Left colon (tissue), 2 donors: ENCODE measurements at regions of chr10 and their contacts with region 1.

Region 1: GRCh38 chr10:104045151-104046089 is 40.3 kb downstream of the COL17A1 start:
- DNase-seq: peak in 1 of 2 donors; percentile 38
- ATAC-seq: peak; percentile 63

Region 2: DNA sequence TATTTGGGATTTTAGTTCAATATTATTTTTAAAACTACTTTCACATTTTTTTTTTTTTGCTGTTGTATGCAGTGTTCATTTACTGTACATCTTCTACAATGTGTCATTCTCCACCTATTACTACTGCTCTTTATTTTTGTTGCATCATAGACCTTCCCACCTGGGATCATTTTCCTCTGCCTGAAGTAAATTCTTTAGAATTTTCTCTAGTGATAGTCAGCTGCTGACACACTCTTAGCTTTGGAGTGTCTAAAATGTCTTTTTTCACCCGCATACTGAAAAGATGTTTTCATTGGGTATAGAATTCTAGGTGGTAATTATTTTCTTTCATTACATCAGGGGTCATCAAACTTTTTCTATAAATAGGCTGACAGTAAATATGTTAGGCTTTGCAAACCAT is 156.2 kb after region 1 on chr10:
- intact Hi-C with region 1: loop called in 1 of 2 experiments (anchors 5 kb)
- DNase-seq: no peak
- ATAC-seq: no peak